Aorta (tissue), 5 donors: ENCODE measurements at regions of chr14 and their contacts with region 1.

Region 1: DNA sequence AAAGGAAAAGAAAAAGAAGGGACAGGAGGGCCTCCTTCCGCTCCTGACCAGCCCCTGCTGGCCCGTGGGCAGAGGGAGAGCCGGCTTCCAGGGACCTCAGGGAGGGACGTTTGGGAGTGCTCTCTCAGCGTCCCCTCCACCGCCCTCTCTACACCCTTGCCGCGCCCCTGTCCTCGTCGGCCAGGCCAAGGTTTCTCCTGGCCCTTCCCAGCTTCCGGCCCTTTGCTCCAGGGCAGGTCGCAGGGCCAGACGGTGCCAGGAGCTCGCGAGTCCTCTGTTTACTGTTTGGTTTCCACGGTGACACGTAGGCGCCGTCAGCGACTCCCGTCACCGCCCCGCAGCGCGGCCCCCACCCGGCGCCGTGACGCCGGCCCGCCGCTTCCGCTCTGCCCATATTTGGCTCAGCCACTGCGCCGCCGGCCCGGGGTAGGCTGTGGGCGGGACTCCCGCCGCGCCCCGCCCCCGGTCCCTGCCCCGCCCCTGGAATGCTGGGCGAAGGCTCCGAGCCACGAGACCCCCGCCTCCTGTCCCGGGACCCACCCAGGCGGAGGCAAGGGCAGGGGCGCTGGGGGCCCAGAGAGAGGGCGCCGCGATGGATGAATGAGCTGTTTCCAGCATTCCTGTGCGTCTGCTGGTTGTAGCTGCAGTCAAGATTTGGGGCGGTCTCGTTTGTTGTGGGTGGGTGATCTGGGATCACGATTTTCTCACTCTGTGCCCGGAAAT is 15.5 kb downstream of the FOS start:
- DNase-seq: peak; percentile 97 to 98
- ATAC-seq: peak; percentile 95
- H3K4me3 ChIP-seq: peak overlapping the region; percentile 41 to 47
- H3K27ac ChIP-seq: peak overlapping the region; percentile 0 to 96
- H3K4me1 ChIP-seq: no peaks in the 10 kb centered on the region
- H3K27me3 ChIP-seq: no peaks in the 10 kb centered on the region

Region 2: GRCh38 chr14:75132382-75133086 is 161.5 kb before region 1 on chr14:
- intact Hi-C with region 1: loop called in 1 of 2 experiments (anchors 1 kb)
- DNase-seq: no peak
- ATAC-seq: peak; percentile 90
- H3K4me3 ChIP-seq: no peak overlapping the region
- H3K27ac ChIP-seq: no peak overlapping the region
- H3K4me1 ChIP-seq: no peaks in the 10 kb centered on the region
- H3K27me3 ChIP-seq: no peaks in the 10 kb centered on the region

Region 3: DNA sequence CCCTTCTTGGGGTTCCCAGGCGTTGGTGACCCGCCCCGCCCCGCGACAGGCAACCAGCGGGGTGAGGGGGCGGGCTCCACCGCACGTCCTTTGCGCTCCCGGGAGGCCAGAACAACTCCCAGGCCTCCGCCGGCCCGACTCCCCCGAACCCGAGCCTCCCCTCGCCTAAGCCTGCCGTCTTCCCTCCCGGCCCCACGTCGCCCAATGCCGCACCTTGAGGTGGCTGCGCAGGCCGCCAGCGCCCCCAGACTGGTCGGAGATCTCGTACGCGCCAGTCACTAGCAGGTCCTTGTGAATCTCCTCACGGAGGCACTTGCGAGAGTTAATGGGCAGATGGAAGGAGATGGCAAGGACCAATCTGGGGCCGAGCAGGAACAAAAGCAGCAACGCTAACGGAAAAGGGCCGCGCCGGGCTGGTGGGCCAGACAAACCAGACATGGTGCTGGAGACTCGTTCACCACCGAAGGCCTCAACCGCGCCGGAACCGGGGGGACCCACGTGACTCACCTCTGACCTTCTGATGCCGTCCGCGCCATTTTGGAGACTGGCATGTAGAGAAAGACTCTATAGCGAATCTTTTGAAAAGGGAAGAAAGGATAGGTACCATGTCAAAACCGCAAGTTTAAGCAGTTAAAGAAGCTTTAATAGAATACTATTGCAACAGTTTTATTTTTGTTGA is 117.8 kb before region 1 on chr14 and contains the start of gene TMED10:
- intact Hi-C with region 1: loop called in 1 of 2 experiments (anchors 1 kb)
- DNase-seq: peak; percentile 94 to 96
- ATAC-seq: peak; percentile 97
- H3K4me3 ChIP-seq: peak within 1 kb of the TSS; percentile 57 to 60
- H3K27ac ChIP-seq: peak within 1 kb of the TSS; percentile 5 to 92
- H3K4me1 ChIP-seq: peaks cover 2 to 6% of the 10 kb centered on the region in 2 donors
- H3K27me3 ChIP-seq: no peaks in the 10 kb centered on the region
- total RNA-seq, gene TMED10: 249 to 277 TPM

Region 4: DNA sequence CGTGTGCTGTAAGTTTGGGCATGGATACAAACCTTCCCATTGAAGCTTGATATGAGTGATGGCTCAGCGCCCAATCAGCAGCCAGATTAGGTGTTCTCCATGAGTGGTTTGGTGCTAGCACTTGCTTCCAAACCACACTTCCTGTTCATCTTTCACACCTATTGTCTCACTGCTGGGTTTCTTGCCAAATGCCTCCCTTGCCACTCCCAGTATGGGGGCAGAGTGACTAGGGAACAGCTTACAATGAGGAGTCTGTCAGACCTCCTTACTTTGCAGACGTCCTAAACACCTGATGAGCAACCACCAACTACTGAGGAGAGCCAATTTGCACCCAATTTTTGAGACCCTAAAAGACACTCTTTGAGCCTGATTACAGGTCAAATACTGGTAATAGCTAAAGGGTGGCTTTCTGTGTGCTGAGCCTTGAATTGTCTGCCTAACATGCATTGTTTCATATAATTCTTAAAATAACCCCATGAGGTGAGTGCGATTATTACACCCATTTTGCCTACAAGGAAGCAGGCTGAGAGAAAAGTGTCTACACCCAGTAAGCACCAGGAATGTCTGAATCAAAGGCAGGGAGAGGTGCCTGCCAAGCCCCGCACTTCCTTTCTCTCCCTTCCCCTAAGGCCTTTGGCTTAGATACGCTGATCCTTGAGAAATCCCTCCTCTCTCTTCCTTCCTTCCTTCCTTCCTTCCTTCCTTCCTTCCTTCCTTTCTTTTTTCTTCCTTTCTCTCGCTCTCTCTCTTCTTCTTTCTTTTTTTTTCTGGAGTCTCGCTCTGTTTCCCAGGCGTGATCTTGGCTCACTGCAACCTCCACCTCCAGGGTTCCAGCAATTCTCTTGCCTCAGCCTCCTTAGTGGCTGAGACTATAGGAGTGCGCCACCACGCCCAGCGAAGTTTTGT is 63.7 kb before region 1 on chr14:
- intact Hi-C with region 1: loop called (anchors 5 to 10 kb)
- DNase-seq: no peak
- ATAC-seq: no peak
- H3K4me3 ChIP-seq: no peak overlapping the region
- H3K27ac ChIP-seq: no peak overlapping the region
- H3K4me1 ChIP-seq: no peaks in the 10 kb centered on the region
- H3K27me3 ChIP-seq: no peaks in the 10 kb centered on the region

Region 5: DNA sequence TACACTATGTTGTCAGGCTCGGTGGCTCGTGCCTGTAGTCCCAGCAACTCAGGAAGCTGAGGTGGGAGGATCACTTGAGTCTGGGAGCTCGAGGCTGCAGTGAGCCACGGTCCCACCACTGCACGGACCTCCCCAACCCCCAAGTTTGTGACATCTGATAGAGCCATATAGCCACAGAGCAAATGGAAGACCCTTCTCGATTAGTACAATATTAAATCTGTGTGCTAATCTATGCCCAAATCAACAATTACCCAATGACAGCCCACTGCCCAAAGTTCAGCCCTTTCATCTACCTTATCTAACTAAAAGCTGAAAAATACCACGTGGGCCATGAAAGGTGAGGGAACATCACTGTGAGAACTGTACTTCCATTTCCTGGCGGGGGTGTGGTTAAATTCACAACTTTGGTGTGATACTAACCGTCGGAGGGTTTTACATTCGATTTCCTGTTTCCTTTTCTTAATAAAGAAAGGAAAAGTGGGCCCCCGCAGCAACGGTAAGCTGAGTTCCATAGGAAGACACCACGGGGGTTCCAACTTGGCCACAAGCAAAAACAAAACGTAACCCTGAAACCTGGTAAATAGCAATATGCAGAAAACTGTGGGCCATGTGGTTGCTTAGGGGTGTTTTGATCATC is 46.7 kb before region 1 on chr14:
- intact Hi-C with region 1: no loop called
- DNase-seq: no peak
- ATAC-seq: no peak
- H3K4me3 ChIP-seq: no peak overlapping the region
- H3K27ac ChIP-seq: no peak overlapping the region
- H3K4me1 ChIP-seq: no peaks in the 10 kb centered on the region
- H3K27me3 ChIP-seq: no peaks in the 10 kb centered on the region

Region 6: GRCh38 chr14:75258615-75259466 is 35.2 kb before region 1 on chr14:
- intact Hi-C with region 1: loop called in 1 of 2 experiments (anchors 2 kb)
- DNase-seq: peak; percentile 100
- ATAC-seq: peak; percentile 96
- H3K4me3 ChIP-seq: peak overlapping the region; percentile 0 to 15
- H3K27ac ChIP-seq: peak overlapping the region; percentile 73 to 96
- H3K4me1 ChIP-seq: no peaks in the 10 kb centered on the region
- H3K27me3 ChIP-seq: no peaks in the 10 kb centered on the region

Region 7: DNA sequence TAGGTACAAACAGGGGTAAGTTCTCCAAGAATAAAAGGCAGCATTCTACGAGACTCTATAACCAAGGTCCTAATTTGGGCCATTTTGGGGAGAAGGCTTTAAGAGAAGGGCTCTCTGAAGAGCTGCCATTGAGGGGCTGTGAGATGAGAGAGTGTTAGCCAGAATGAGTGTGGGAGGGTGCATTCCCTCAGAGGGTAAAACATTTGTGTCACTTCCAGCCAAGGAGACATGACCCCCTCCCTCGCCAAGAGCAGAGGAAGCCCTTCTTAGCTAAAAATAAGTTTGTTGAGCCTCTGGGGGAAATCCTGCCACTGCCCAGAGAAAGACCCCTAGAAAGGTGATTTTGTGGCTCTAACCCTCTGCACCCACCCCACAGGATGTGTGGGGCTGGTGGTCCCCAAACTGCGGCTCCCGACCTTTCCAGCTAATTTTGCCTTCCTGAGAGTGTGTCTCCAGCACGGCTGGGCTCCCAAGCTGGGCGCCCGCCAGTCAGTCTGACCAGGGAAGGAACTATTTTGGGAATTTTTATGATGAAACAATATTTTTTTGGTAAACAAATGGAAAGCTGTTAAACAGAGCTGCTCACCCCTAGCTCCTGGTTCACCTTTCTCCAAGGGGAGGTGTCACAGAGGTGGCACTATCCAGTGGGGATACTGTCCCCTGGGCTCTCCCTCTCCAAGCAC is 67.8 kb after region 1 on chr14:
- intact Hi-C with region 1: no loop called
- DNase-seq: peak; percentile 67 to 84
- ATAC-seq: peak; percentile 71
- H3K4me3 ChIP-seq: no peak overlapping the region
- H3K27ac ChIP-seq: peak overlapping the region in 1 of 2 donors; percentile 41
- H3K4me1 ChIP-seq: no peaks in the 10 kb centered on the region
- H3K27me3 ChIP-seq: no peaks in the 10 kb centered on the region